PC-9 (cell line): ENCODE measurements at regions of chr7 and their contacts with region 1.

Region 1: DNA sequence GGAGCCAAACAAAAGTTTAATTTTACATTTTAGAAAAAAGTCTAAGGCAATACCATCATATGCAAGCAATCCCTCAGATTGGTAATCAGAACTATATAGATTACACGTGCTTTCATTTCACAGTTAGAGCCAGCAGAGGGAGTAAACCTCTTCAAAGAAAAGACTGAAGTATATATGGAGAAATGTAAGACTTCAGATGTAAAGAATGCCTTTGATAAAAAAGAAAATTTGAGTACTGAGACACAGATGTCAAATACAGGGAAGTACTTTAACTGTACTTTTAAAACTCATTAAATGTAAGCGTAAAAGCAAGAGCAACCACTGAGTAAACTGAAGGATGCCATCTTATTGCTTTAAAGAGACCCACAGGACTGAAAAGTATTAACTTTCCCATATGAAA is 101.4 kb upstream of the FAM133B start:
- DNase-seq: peak; percentile 8 to 66
- H3K4me3 ChIP-seq: no peak overlapping the region
- H3K27ac ChIP-seq: no peak overlapping the region
- H3K4me1 ChIP-seq: peaks cover 6% of the 10 kb centered on the region; the same call in 1 of the 2 replicates
- H3K27me3 ChIP-seq: no peaks in the 10 kb centered on the region
- CTCF ChIP-seq: peak; percentile 80

Region 2: GRCh38 chr7:92797693-92798092 is 106.1 kb after region 1 on chr7:
- CTCF ChIA-PET with region 1: no interaction called
- POLR2A ChIA-PET with region 1: no interaction called
- intact Hi-C with region 1: no loop called
- DNase-seq: no peak
- H3K4me3 ChIP-seq: no peak overlapping the region
- H3K27ac ChIP-seq: no peak overlapping the region
- H3K4me1 ChIP-seq: no peaks in the 10 kb centered on the region
- H3K27me3 ChIP-seq: no peaks in the 10 kb centered on the region
- CTCF ChIP-seq: no peak

Region 3: GRCh38 chr7:92823042-92823441 is 131.5 kb after region 1 on chr7:
- CTCF ChIA-PET with region 1: interaction called, 13 read pairs
- POLR2A ChIA-PET with region 1: no interaction called
- intact Hi-C with region 1: no loop called
- DNase-seq: no peak
- H3K4me3 ChIP-seq: no peak overlapping the region
- H3K27ac ChIP-seq: no peak overlapping the region
- H3K4me1 ChIP-seq: no peaks in the 10 kb centered on the region
- H3K27me3 ChIP-seq: no peaks in the 10 kb centered on the region
- CTCF ChIP-seq: no peak

Region 4: GRCh38 chr7:92916674-92917224 is 225.2 kb after region 1 on chr7:
- CTCF ChIA-PET with region 1: no interaction called
- POLR2A ChIA-PET with region 1: no interaction called
- intact Hi-C with region 1: loop called (anchors 10 kb)
- DNase-seq: peak; percentile 86 to 95
- H3K4me3 ChIP-seq: no peak overlapping the region
- H3K27ac ChIP-seq: peak overlapping the region; percentile 83
- H3K4me1 ChIP-seq: peaks cover 18% of the 10 kb centered on the region
- H3K27me3 ChIP-seq: no peaks in the 10 kb centered on the region
- CTCF ChIP-seq: no peak

Region 5: DNA sequence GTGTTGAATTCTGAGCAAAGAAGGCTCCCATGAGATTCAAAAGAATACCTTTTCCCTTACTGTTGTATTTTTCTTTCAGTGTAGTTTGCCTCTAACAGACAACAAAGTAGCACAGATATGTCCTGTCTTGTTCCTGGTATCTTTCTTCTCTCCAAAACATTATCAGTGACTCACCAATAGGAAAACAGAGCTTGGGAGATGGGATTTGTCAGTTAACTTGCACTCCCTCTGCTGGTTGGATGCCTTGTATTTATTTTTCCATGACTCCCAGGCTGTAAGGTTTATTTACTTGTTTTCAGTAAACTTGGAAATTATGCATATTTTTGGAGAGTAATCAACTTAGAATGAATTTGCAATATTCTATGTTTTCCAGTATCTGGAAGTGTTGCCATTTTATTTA is 296.5 kb after region 1 on chr7:
- CTCF ChIA-PET with region 1: interaction called, 3 read pairs
- POLR2A ChIA-PET with region 1: no interaction called
- intact Hi-C with region 1: loop called (anchors 5 kb)
- DNase-seq: peak; percentile 5 to 57
- H3K4me3 ChIP-seq: no peak overlapping the region
- H3K27ac ChIP-seq: no peak overlapping the region
- H3K4me1 ChIP-seq: no peaks in the 10 kb centered on the region
- H3K27me3 ChIP-seq: no peaks in the 10 kb centered on the region
- CTCF ChIP-seq: peak; percentile 69

Region 6: DNA sequence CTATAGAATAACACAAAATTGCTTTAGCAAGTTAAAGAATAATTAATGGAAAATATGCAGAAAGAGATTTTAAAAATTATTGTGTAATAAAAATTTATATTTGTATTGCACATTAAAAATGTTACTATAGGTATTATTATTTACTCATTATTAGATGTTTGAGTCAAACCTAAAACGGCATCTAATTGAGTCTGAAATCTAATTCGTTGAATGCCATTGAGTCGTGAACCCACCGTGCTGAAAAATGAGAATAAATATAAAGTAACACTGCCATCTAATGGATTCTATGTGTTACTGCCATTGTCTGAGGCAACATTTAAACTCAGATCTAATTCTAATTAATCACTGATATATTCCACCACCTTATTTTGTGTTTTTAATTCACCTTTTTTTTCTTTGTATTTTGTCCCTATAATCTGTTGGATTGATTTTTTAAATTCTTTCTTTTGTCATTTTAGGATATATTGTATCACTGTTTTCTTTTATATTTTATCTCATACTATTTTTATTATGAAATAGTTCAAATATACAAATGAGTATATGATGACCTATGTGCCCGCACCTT is 364.0 kb after region 1 on chr7:
- CTCF ChIA-PET with region 1: no interaction called
- POLR2A ChIA-PET with region 1: no interaction called
- intact Hi-C with region 1: loop called (anchors 2 kb)
- DNase-seq: peak in 1 of 2 experiments; percentile 50
- H3K4me3 ChIP-seq: no peak overlapping the region
- H3K27ac ChIP-seq: no peak overlapping the region
- H3K4me1 ChIP-seq: no peaks in the 10 kb centered on the region
- H3K27me3 ChIP-seq: no peaks in the 10 kb centered on the region
- CTCF ChIP-seq: peak; percentile 87

Region 7: DNA sequence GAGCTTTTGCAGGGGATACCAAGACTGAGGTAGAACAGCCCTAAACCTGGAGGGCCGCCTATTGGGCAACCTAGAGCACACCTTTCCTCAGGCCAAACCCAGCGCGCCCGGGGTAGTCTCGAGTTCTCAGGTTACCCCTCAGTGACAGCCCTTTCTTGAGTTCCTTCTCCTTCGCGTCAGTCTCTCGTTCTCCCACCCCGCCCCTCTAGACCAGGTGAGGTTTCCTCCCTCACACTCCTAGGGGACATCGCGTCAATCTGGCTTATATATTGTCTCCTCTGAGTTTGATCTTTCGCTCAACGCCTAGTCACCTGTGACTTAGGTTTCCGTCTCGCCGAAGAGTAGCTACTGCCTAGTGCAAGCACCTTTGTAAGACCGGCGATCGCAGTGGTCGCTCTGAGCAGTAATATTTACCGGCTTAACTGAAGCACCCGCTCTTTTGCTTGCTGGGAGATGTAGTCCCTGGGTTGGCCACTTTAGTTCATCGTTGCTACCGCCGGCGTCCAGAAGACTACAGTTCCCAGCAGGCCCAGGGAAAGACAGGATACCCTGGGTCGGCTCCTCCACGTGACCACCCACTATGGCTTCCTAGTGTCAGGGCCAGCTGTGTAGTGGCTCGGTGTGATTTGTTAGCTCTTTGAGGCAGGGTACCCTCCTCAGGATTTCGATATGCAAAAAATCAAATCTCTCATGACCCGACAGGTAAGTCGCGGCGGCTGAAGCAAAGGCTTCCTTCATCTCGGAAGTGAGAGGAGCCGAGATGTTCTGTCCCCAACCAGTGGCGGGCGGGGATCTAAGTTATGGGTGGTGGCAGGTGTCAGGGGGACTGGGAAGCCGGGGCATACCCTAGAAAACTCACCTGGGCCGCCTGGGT is 540.5 kb after region 1 on chr7 and contains the start of gene VPS50:
- CTCF ChIA-PET with region 1: no interaction called
- POLR2A ChIA-PET with region 1: interaction called, 3 read pairs
- intact Hi-C with region 1: loop called (anchors 10 kb)
- DNase-seq: peak; percentile 95 to 96
- H3K4me3 ChIP-seq: peak within 1 kb of the TSS; percentile 70
- H3K27ac ChIP-seq: peak within 1 kb of the TSS; percentile 86
- H3K4me1 ChIP-seq: peaks cover 14% of the 10 kb centered on the region; the same call in 1 of the 2 replicates
- H3K27me3 ChIP-seq: no peaks in the 10 kb centered on the region
- CTCF ChIP-seq: peak; percentile 21; the same call in 1 of the 2 replicates
- total RNA-seq, gene VPS50: 20.3 and 32.2 TPM in 2 replicates